ENCODE measurements at regions of chr11 and their contacts with region 1.

Region 1: GRCh38 chr11:14907411-14908213 is 15.6 kb upstream of the CYP2R1 start:
- DNase-seq: peak; percentile 50 to 90 (median 78)
- ATAC-seq: peak; percentile 54 to 66 (median 56)
- H3K4me3 ChIP-seq: no peak overlapping the region
- H3K4me3 Mint-ChIP-seq: no peak overlapping the region
- H3K27ac ChIP-seq: peak overlapping the region; percentile 22
- H3K27ac Mint-ChIP-seq: peak overlapping the region; percentile 7 to 71
- H3K4me1 ChIP-seq: peaks cover 0 to 28% of the 10 kb centered on the region in 2 experiments
- H3K4me1 Mint-ChIP-seq: peaks cover 40 to 46% (median 46%) of the 10 kb centered on the region in 3 donors
- H3K27me3 ChIP-seq: no peaks in the 10 kb centered on the region
- H3K27me3 Mint-ChIP-seq: no peaks in the 10 kb centered on the region

Region 2: GRCh38 chr11:13229711-13230318 is 1677.8 kb before region 1 on chr11:
- CTCF ChIA-PET with region 1: no interaction called
- POLR2A ChIA-PET with region 1: no interaction called
- DNase-seq: no peak
- ATAC-seq: no peak
- H3K4me3 ChIP-seq: no peak overlapping the region
- H3K4me3 Mint-ChIP-seq: no peak overlapping the region
- H3K27ac ChIP-seq: no peak overlapping the region
- H3K27ac Mint-ChIP-seq: no peak overlapping the region
- H3K4me1 ChIP-seq: no peaks in the 10 kb centered on the region
- H3K4me1 Mint-ChIP-seq: peaks cover 6 to 11% (median 9%) of the 10 kb centered on the region in 3 donors
- H3K27me3 ChIP-seq: no peaks in the 10 kb centered on the region
- H3K27me3 Mint-ChIP-seq: peaks cover 0 to 4% of the 10 kb centered on the region in 2 donors

Region 3: DNA sequence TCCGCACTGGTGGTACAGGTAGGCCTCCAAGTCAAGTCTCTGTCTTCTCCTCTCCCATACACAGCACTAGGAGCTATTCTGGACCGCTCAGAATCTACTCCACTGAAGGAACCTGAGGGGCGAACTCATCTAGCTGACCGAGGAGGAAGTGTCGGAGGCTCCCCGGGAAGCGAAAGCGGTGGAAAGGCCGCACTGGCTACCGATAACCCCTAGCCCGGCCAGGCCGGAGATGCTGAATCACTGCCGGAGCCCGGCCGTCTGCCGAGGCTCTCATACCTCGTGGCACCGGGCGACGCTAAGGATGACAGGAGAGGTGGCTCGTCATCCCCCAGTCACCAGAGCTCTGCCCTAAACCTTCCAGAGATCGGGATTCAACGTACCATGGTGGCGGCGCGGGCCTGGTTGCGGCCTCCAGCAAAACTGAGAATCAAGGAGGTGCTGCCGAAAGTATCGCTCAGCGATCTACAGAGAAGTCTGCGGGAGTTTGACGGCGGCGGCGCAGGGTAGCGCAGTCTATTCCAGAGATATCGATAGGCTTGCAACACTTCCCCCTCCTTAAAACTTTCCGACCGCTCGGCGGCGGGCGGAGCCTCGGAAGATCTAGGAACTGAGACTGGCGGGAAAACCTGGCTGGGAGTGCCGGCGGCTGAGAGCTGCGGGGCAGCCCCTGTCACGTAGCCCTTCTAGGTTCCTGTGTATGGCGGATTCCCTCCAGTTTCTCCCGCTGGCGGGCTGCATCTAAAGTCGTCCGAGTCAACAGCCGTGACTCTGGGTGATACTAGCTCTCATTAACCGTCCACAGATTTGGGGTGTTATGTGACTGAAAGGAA is 387.5 kb before region 1 on chr11 and contains the start of gene PSMA1:
- CTCF ChIA-PET with region 1: interaction called, 3 to 11 read pairs
- POLR2A ChIA-PET with region 1: no interaction called
- DNase-seq: peak; percentile 68 to 94 (median 89)
- ATAC-seq: peak; percentile 93 to 96 (median 94)
- H3K4me3 ChIP-seq: peak within 1 kb of the TSS; percentile 68 to 100
- H3K4me3 Mint-ChIP-seq: peak within 1 kb of the TSS; percentile 83 to 97 (median 96)
- H3K27ac ChIP-seq: peak within 1 kb of the TSS; percentile 77
- H3K27ac Mint-ChIP-seq: peak within 1 kb of the TSS; percentile 96 to 98
- H3K4me1 ChIP-seq: peaks cover 18% of the 10 kb centered on the region in 2 experiments
- H3K4me1 Mint-ChIP-seq: peaks cover 32 to 37% (median 34%) of the 10 kb centered on the region in 3 donors
- H3K27me3 ChIP-seq: no peaks in the 10 kb centered on the region
- H3K27me3 Mint-ChIP-seq: no peaks in the 10 kb centered on the region
- total RNA-seq, gene PSMA1: 107 to 137 (median 115) TPM

Region 4: DNA sequence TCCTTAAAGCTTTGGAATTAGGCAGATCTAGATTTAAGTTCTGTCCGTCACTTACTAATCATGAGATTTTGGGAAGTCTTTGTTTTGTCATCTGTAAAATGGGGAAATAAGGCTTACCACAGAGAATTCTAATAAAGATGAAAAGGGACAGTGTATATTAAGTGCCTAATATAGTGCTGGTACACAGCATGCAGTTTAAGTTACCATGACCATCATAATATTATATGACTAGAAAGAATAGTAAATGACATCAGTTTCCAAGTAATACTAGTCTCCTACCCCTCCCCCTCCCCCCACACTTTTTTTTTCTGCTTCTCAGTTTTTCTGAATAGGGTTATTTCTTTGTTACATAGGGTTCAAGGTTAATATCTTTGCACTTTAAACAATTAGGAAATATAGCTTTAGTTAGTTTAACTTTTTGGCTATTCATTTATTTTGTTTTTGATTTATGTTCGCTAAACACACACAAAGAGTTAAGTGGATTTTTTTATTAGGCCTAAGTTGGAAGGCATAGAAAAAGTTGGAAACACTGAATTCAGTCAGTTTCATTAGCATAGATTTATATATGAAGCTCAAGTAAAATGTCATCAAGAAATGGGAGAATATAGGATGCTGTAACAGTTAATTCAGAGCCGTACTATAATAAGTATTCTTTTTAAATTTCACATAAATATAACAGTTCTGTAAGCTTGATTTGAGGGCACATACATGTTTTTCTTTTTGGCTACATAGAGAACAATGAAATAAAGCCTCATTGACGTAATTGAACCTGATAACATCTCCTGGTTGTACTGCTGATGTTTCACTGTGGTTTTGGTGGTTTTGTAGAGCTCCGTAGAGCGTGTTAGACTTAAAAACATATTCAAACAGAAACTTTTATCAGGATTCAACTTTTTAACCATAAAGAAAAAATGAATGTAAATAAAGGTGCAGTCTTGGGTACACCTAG is 142.8 kb before region 1 on chr11:
- CTCF ChIA-PET with region 1: interaction called in 1 of 2 experiments, 14 read pairs
- POLR2A ChIA-PET with region 1: no interaction called
- DNase-seq: peak in 26 of 35 experiments; percentile 8 to 94 (median 40)
- ATAC-seq: peak; percentile 92 to 96 (median 94)
- H3K4me3 ChIP-seq: no peak overlapping the region
- H3K4me3 Mint-ChIP-seq: peak overlapping the region in 1 of 3 donors; percentile 61
- H3K27ac ChIP-seq: peak overlapping the region; percentile 84
- H3K27ac Mint-ChIP-seq: no peak overlapping the region
- H3K4me1 ChIP-seq: peaks cover 9 to 77% of the 10 kb centered on the region in 2 experiments
- H3K4me1 Mint-ChIP-seq: peaks cover 36 to 48% (median 45%) of the 10 kb centered on the region in 3 donors
- H3K27me3 ChIP-seq: no peaks in the 10 kb centered on the region
- H3K27me3 Mint-ChIP-seq: no peaks in the 10 kb centered on the region

Region 5: GRCh38 chr11:14861680-14862079 is 45.9 kb before region 1 on chr11:
- CTCF ChIA-PET with region 1: interaction called in 1 of 2 experiments, 11 read pairs
- POLR2A ChIA-PET with region 1: interaction called in 1 of 2 experiments, 3 read pairs
- DNase-seq: no peak
- ATAC-seq: no peak
- H3K4me3 ChIP-seq: no peak overlapping the region
- H3K4me3 Mint-ChIP-seq: no peak overlapping the region
- H3K27ac ChIP-seq: no peak overlapping the region
- H3K27ac Mint-ChIP-seq: peak overlapping the region in 1 of 2 donors; percentile 58
- H3K4me1 ChIP-seq: no peaks in the 10 kb centered on the region
- H3K4me1 Mint-ChIP-seq: peaks cover 6 to 12% (median 9%) of the 10 kb centered on the region in 3 donors
- H3K27me3 ChIP-seq: no peaks in the 10 kb centered on the region
- H3K27me3 Mint-ChIP-seq: no peaks in the 10 kb centered on the region

Region 6: DNA sequence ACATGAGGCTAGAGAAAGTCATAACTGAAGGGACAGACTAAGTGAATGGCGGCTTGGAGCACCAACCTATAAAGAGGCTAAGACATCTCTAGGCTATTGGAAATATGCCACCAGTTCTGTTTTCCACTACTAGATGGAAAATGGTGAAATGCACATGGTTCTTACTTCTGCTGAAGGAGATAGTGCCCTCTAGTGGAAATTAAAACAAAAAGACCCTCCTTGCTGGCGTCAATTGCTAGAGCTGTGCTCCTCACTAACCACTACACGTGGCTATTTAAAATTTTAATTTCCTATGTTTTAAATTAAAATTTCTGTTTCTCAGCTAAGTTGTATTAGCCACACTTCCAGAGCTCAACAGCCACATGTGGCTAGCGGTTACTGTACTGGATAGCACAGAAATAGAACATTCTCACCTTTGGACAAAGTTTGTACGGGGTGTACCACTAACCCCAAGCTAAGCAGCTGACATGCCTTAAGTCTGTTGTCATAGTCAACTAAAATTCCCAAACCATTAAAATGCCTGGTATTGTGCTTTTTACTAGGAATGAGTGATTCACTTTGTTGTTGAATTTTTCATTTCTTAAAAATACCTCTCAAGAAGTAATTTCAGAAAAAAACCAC is 98.6 kb after region 1 on chr11:
- CTCF ChIA-PET with region 1: interaction called, 14 to 39 read pairs
- POLR2A ChIA-PET with region 1: no interaction called
- DNase-seq: peak in 3 of 35 experiments; percentile 1 to 54 (median 10)
- ATAC-seq: peak in 2 of 4 experiments; percentile 48 to 50
- H3K4me3 ChIP-seq: no peak overlapping the region
- H3K4me3 Mint-ChIP-seq: no peak overlapping the region
- H3K27ac ChIP-seq: no peak overlapping the region
- H3K27ac Mint-ChIP-seq: no peak overlapping the region
- H3K4me1 ChIP-seq: no peaks in the 10 kb centered on the region
- H3K4me1 Mint-ChIP-seq: no peaks in the 10 kb centered on the region
- H3K27me3 ChIP-seq: peaks cover 0 to 3% of the 10 kb centered on the region in 2 experiments
- H3K27me3 Mint-ChIP-seq: peaks cover 20 to 41% of the 10 kb centered on the region in 2 donors

Region 7: DNA sequence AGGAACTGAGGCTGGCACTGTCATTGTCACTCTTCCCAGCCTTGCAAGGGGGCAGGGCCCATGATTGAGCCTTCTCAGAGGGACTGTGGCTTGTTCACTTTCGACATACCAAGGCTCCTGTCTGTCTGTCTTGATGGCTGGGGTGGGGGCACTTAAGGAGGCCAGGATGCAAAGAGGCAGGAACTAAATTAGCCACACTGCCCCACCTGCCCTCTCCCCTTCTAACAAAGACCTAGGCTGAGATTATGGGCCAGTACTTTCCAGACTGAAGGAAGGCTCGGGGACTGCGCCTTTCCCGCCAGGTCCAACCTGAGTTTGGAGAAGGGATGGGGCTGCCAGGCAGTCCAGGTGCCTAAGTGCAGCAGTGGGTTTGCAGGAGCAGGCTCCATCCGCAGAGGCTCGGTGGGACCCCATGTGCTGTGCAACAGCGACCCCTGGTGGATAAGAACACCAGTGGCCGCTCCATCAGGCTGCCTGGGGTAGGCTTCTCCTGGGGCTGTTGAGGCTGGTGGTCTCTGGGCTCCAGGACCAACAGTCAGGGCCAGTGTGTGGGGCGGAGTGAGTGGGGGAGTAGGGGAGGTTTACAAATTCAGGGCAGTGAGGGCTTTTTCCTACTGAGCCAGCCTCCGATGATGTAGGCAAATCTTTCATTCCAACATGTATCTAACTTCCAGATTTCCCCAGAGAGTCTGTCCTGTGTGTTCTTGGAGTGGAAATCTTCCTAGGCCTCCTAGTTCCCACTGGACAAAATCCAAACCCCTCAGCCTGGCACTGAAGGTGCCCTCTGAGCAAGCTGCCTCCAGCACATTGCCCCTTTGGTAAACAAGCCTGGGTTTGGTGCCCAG is 301.0 kb after region 1 on chr11:
- CTCF ChIA-PET with region 1: interaction called, 6 to 15 read pairs
- POLR2A ChIA-PET with region 1: no interaction called
- DNase-seq: peak; percentile 19 to 79 (median 62)
- ATAC-seq: peak; percentile 77 to 83 (median 79)
- H3K4me3 ChIP-seq: no peak overlapping the region
- H3K4me3 Mint-ChIP-seq: no peak overlapping the region
- H3K27ac ChIP-seq: no peak overlapping the region
- H3K27ac Mint-ChIP-seq: no peak overlapping the region
- H3K4me1 ChIP-seq: peaks cover 0 to 4% of the 10 kb centered on the region in 2 experiments
- H3K4me1 Mint-ChIP-seq: no peaks in the 10 kb centered on the region
- H3K27me3 ChIP-seq: peaks cover 0 to 19% of the 10 kb centered on the region in 2 experiments
- H3K27me3 Mint-ChIP-seq: peaks cover 8 to 11% of the 10 kb centered on the region in 2 donors

Measured in T-cell (primary cell).